Cardiac septum (tissue), 1 donor: ENCODE measurements at regions of chrX and their contacts with region 1.

Region 1: DNA sequence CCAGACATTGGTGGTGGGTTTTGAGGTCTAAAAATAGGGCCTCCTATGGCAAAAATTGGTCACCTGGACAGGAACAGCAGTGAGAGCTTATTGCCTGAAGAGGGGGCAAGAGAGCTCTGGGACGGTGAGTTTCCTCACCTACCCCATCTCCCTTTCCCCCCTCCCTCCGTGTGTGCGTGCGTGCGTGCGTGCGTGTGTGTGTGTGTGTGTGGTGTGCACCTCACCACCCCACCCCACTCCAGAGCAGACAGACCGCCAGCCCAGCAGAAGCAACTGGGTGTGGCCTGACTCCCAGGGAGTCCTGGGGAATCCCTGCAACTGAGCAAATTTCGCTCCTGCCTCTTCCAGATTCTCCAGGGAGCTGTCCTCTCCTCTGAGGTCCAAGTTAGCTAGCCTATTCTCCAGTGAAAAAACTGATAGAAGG is 44.7 kb downstream of the PRPS1 start:
- DNase-seq: peak; percentile 80

Region 2: GRCh38 chrX:107716816-107717700 is 44.1 kb after region 1 on chrX:
- intact Hi-C with region 1: loop called (anchors 2 kb)
- DNase-seq: peak; percentile 94